Activated CD4-positive, alpha-beta memory T cell treated with anti-CD3 and anti-CD28 coated beads for 36 hours (primary cell): ENCODE measurements at regions of chr11 and their contacts with region 1.

Region 1: DNA sequence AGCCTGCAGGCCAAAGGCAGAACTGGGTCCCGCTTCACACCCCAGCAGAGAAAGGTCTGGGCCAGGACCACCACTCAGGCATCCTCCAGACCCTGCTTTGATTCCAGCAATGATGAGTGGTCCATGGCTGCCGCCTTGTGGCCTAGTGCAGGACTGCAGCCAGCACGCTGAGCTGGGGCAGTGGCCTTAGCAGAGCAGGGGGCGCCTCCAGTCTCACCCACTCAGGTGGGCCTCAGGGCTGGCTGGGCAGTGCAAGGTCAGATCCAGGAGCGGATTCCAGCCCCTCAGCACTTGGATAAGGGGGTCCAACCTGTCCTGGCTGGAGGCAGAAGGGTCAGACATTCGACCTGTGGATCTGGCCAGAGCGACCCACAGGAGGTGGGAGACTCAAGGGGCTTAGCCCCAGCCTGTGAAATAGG is 9.6 kb upstream of the PDE2A start:
- DNase-seq: peak; percentile 79
- H3K4me3 Mint-ChIP-seq: no peak overlapping the region
- H3K27ac Mint-ChIP-seq: no peak overlapping the region
- H3K4me1 Mint-ChIP-seq: peaks cover 17% of the 10 kb centered on the region
- H3K27me3 Mint-ChIP-seq: peaks cover 4% of the 10 kb centered on the region

Region 2: DNA sequence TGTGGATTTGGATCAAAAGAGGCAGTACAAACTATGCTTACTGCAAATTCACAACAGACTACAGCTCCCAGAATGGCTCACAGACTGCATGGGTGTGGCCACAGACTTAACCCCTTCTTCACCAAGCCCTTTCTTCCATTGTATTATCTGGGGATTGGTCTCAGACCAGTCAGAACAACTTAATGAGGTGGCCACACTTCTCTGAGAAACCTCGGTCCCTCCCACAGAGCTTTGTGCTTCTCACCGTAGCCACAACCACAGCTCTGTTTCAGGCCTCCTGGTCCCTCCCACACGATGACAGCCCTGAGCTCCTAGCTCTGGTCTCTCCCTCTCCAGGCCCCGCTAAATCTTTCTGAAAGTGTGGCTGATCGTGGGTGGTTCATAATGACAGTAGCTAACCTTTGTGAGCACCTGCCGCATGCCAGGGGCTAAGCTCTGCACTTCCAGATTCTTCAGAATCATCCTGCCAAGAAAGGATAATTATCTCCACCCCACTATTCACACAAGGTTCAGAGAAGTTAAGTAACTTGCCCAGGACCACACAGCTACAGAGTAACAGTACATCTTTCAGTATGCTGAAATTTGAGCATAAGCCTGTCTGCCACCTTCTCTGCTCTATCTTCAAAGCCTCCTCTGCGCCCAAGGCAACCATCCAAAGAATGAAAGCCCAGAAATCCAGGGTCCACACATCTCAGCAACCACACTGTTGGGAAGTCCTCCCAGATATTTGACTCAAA is 15.0 kb before region 1 on chr11:
- CTCF ChIA-PET with region 1: interaction called, 42 read pairs
- POLR2A ChIA-PET with region 1: interaction called, 4 read pairs
- intact Hi-C with region 1: no loop called
- DNase-seq: peak; percentile 86
- H3K4me3 Mint-ChIP-seq: no peak overlapping the region
- H3K27ac Mint-ChIP-seq: peak overlapping the region; percentile 25
- H3K4me1 Mint-ChIP-seq: peaks cover 11% of the 10 kb centered on the region
- H3K27me3 Mint-ChIP-seq: peaks cover 60% of the 10 kb centered on the region

Region 3: DNA sequence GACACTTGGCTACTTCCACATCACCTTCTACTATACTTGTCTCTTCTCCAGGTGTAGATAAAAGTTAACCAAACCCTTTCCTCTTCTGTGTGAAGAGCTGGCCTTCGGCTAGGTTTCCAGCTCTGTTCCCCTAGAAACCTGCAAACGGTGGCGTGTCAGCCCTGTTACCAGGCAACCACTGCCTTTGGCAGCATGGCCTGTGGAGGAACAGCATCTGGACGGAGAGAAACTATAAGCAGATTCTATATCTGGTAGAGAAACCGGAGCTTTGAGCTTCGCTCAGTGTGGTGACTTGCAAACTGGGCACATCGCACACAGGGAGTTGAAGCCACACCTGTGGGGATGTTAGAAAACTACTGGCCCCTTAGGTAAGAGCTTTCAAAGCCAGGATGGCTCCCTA is 32.5 kb after region 1 on chr11:
- CTCF ChIA-PET with region 1: interaction called, 10 read pairs
- POLR2A ChIA-PET with region 1: interaction called, 5 read pairs
- intact Hi-C with region 1: no loop called
- DNase-seq: no peak
- H3K4me3 Mint-ChIP-seq: no peak overlapping the region
- H3K27ac Mint-ChIP-seq: no peak overlapping the region
- H3K4me1 Mint-ChIP-seq: peaks cover 44% of the 10 kb centered on the region
- H3K27me3 Mint-ChIP-seq: no peaks in the 10 kb centered on the region